Activated T-helper 2 cell treated with anti-CD3 and anti-CD28 coated beads, Interferon-gamma antibody, Interleukin-2, Interleukin-4, amounts not matched to agents 10 μg/mL and 5 μg/mL and 100 μg/mL, durations not matched to agents 14 hours and 24 hours and 36 hours (primary cell): ENCODE measurements at regions of chr13 and their contacts with region 1.

Region 1: DNA sequence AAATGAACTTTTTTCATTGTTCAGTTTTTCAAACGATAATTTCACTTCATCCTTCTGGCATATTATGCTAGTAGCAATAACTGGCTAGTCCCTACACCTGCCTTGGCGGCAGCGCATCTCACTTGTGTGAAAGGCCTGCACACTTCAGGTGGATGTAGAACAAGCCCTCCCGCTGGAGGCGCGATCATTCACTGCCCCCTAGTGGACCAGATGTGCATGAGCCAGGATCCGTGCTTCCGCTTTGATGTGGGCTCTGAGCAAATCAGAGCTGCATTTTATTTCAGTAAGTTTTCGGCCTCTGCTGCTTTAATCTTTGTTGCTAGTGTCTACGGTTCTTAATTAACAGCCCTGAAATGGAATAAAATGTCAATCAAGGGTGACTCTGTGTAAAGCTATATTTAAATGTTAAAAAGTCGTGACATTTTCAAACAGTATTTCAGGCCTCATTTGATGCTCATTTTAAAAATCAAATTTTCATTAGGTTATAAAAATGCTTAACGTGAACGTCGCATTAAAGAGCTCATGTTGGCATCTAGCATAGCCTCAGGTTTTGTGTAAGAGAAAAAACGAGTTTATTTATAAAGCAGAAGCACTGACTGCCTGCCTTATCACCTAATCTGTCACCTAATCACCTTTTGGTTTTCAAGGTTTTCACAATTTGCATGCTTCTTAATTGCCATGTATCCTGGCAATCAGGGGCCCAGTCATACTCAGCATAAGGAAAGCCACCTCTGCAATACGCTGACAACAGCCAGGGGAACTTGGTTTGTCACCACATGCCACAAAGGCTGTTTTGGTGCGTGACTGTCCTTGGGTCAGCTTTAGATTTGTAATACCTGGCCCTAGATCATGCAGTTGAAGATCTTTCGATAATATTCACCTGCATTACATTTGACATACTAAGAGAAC is 112.2 kb downstream of the TEX26 start:
- DNase-seq: peak; percentile 78
- H3K4me3 Mint-ChIP-seq: peak overlapping the region; percentile 7
- H3K27ac Mint-ChIP-seq: peak overlapping the region; percentile 86
- H3K4me1 Mint-ChIP-seq: peaks cover 45% of the 10 kb centered on the region
- H3K27me3 Mint-ChIP-seq: no peaks in the 10 kb centered on the region

Region 2: GRCh38 chr13:30572859-30573275 is 471.8 kb before region 1 on chr13:
- intact Hi-C with region 1: loop called (anchors 10 kb)
- DNase-seq: no peak
- H3K4me3 Mint-ChIP-seq: peak overlapping the region; percentile 62
- H3K27ac Mint-ChIP-seq: peak overlapping the region; percentile 18
- H3K4me1 Mint-ChIP-seq: peaks cover 54% of the 10 kb centered on the region
- H3K27me3 Mint-ChIP-seq: peaks cover 2% of the 10 kb centered on the region

Region 3: GRCh38 chr13:30865123-30866049 is 179.2 kb before region 1 on chr13:
- intact Hi-C with region 1: loop called (anchors 1 kb)
- DNase-seq: peak; percentile 35
- H3K4me3 Mint-ChIP-seq: no peak overlapping the region
- H3K27ac Mint-ChIP-seq: peak overlapping the region; percentile 39
- H3K4me1 Mint-ChIP-seq: peaks cover 8% of the 10 kb centered on the region
- H3K27me3 Mint-ChIP-seq: peaks cover 24% of the 10 kb centered on the region

Region 4: GRCh38 chr13:31056644-31057271 is 12.1 kb after region 1 on chr13:
- intact Hi-C with region 1: loop called (anchors 1 kb)
- DNase-seq: no peak
- H3K4me3 Mint-ChIP-seq: no peak overlapping the region
- H3K27ac Mint-ChIP-seq: no peak overlapping the region
- H3K4me1 Mint-ChIP-seq: peaks cover 5% of the 10 kb centered on the region
- H3K27me3 Mint-ChIP-seq: peaks cover 3% of the 10 kb centered on the region

Region 5: DNA sequence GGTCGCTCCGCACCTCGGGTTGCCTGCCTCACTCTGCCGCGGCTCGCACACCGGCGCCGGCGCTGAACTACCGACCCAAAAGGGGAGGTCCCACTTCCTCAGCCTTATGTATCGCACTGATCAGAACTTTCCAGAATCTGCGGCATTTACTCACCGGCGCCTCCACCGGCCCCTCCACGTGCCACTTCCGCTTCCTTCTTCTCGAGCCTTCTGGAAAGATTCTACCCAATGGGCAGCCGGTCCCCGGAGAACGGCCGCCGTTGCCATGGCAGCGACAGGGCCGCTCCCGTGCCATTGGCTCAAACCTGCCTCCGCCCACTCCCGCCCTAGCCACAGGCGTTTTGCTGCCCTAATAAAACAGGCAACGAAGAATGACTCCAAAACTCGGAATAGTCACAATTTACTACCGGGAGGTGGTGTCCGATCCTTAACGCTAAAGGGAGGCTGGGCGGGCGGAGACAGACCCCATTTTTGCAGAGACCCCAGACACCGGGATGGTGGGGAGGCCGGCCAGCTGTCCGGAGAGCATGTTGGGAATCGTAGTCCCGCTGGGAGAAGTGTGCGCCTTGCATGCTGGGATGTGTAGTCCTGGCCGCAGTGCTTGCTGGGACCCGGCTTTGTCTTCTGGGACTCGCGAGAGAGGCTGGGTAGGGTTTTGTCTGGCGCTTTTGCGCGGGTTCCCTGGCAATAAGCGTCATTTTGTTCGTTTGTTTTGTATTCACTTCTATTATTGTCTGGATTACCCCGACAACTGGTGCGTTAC is 117.4 kb after region 1 on chr13 and contains the start of gene HSPH1:
- intact Hi-C with region 1: loop called (anchors 2 kb)
- DNase-seq: peak; percentile 98
- H3K4me3 Mint-ChIP-seq: peak within 1 kb of the TSS; percentile 95
- H3K27ac Mint-ChIP-seq: peak within 1 kb of the TSS; percentile 97
- H3K4me1 Mint-ChIP-seq: peaks cover 41% of the 10 kb centered on the region
- H3K27me3 Mint-ChIP-seq: no peaks in the 10 kb centered on the region
- total RNA-seq, gene HSPH1: 269 and 274 TPM in 2 replicates